ENCODE measurements at regions of chr2 and their contacts with region 1.

Region 1: GRCh38 chr2:17851731-17852585 is 26.5 kb upstream of the KCNS3 start:
- DNase-seq: no peak
- H3K4me3 ChIP-seq: no peak overlapping the region
- H3K27ac ChIP-seq: no peak overlapping the region
- H3K4me1 ChIP-seq: peaks cover 0 to 6% (median 0%) of the 10 kb centered on the region in 3 donors
- H3K27me3 ChIP-seq: peaks cover 0 to 32% (median 0%) of the 10 kb centered on the region in 4 donors
- CTCF ChIP-seq: peak; percentile 70 to 98 (median 88)
- POLR2A ChIP-seq: no peak

Region 2: DNA sequence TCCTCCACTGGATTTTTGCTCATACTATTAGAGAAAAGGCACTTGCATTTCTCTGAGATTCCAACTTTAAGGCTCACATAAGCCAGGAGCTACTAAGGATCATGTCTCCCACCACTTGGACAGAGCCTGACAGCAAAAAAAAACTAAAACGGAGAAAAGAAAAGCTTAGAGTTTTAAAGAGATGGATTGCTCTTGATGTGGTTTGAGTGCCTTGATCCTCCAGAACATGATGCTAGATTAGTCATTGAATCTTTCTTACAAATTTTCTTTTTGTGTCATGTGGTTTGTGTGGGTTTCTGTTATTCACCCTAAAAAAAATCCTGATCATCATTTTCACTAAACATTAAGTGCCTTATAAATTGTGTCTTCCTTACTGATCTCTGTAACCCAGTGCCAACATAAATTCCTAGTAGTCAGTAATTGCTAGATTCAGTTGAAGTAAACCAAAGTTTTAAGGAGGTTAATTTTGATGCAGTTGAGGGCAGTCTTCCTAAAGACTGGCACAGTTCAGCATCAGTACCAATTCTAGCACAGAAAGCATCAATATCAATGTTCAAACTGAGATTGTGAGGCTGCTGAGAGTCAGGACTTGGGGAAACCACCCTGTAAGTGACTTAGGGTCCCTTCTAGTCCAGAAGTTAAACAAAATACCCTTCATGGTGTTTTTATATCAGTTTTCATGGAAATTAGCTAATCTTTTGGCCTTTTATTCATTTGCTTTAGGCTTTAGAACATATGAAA is 540.0 kb before region 1 on chr2:
- intact Hi-C with region 1: no loop called
- DNase-seq: no peak
- H3K4me3 ChIP-seq: no peak overlapping the region
- H3K27ac ChIP-seq: no peak overlapping the region
- H3K4me1 ChIP-seq: no peaks in the 10 kb centered on the region
- H3K27me3 ChIP-seq: no peaks in the 10 kb centered on the region
- CTCF ChIP-seq: no peak
- POLR2A ChIP-seq: no peak

Region 3: GRCh38 chr2:17912266-17912691 is 60.3 kb after region 1 on chr2:
- intact Hi-C with region 1: no loop called
- DNase-seq: no peak
- H3K4me3 ChIP-seq: no peak overlapping the region
- H3K27ac ChIP-seq: no peak overlapping the region
- H3K4me1 ChIP-seq: peaks cover 0 to 20% (median 0%) of the 10 kb centered on the region in 3 donors
- H3K27me3 ChIP-seq: no peaks in the 10 kb centered on the region
- CTCF ChIP-seq: no peak
- POLR2A ChIP-seq: no peak

Region 4: DNA sequence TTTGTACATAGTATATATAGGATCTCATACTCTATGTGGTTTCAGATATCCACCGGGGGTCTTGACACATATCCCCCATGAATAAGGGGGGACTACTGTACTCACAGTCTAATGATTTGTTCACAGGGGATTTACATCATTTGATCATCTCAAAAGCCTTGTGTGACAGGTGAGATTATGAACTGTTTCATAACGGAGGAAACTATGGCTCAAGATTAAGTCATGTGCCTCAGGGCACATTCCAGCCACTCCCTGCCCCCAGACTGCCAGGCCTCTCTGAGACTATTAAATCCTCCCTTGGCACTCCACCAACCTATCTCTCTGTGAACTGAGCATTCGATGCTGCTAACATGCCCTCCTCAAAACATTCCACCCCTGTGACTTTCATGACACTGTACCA is 195.9 kb after region 1 on chr2:
- intact Hi-C with region 1: no loop called
- DNase-seq: no peak
- H3K4me3 ChIP-seq: peak overlapping the region in 1 of 4 donors; percentile 6
- H3K27ac ChIP-seq: no peak overlapping the region
- H3K4me1 ChIP-seq: peaks cover 0 to 27% (median 16%) of the 10 kb centered on the region in 3 donors
- H3K27me3 ChIP-seq: peaks cover 0 to 79% (median 0%) of the 10 kb centered on the region in 4 donors
- CTCF ChIP-seq: no peak
- POLR2A ChIP-seq: no peak

Region 5: DNA sequence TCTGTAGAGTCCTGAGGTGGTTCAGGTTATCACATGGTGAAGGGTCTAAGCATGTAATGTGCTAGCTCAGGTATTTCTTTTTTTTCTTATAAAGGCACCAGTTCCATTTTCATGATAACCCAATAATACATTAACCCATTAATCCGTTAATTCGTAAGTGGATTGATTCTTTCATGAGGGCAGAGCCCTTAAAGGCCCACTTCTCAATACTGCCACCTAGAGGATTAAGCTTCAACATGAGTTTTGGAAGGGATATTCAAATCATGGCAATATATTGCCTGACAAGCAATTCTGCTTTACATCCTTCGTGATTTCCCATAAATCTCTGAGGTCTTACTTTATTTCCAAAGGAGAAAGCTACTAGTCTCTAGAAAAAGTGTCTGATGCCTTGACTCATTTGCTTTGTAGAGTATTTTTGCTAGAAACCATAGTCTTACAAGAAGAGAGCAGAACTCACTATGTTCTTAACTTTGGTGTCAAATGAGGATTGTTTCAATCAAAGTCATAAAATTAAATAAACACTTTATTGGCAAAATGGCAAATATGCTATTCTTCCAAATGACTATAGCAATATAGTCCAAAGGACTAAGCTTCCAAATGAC is 297.8 kb after region 1 on chr2:
- intact Hi-C with region 1: loop called (anchors 10 kb)
- DNase-seq: no peak
- H3K4me3 ChIP-seq: no peak overlapping the region
- H3K27ac ChIP-seq: no peak overlapping the region
- H3K4me1 ChIP-seq: peaks cover 0 to 12% (median 0%) of the 10 kb centered on the region in 3 donors
- H3K27me3 ChIP-seq: peaks cover 0 to 24% (median 0%) of the 10 kb centered on the region in 4 donors
- CTCF ChIP-seq: peak; percentile 19 to 74 (median 54)
- POLR2A ChIP-seq: no peak

Region 6: DNA sequence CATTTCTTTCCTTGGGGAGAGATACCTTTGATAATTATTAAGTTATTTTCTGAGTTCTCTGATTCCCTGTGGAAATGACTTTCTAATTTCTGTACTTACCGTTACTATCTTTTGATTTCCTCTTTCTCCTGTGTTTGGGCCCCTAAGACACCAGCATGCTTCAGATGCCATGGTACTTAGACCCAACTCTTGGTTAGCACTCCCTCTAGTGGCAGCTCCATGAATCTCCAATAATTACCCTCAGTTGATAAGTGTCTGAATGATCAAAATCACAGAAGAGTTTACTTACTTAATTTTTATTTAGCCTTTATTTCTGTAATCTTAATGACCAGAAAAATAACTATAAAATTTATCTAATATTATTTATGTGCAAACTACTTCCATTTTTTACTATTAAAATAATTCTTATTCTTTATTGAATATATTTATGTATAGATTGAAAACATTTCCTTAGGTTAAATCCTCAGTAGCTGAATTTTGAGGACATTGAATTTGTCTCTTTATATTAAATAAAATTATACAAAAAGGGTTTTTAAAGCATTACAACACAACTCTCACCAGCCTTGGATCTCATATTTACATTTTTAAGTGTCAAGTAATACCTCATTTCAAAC is 326.9 kb after region 1 on chr2:
- intact Hi-C with region 1: loop called (anchors 10 kb)
- DNase-seq: no peak
- H3K4me3 ChIP-seq: no peak overlapping the region
- H3K27ac ChIP-seq: no peak overlapping the region
- H3K4me1 ChIP-seq: no peaks in the 10 kb centered on the region
- H3K27me3 ChIP-seq: peaks cover 0 to 13% (median 0%) of the 10 kb centered on the region in 4 donors
- CTCF ChIP-seq: peak; percentile 53 to 85 (median 79)
- POLR2A ChIP-seq: no peak

Region 7: GRCh38 chr2:18387441-18388206 is 535.7 kb after region 1 on chr2:
- intact Hi-C with region 1: loop called (anchors 10 kb)
- DNase-seq: no peak
- H3K4me3 ChIP-seq: no peak overlapping the region
- H3K27ac ChIP-seq: peak overlapping the region in 1 of 4 donors; percentile 34
- H3K4me1 ChIP-seq: peaks cover 0 to 10% (median 0%) of the 10 kb centered on the region in 3 donors
- H3K27me3 ChIP-seq: no peaks in the 10 kb centered on the region
- CTCF ChIP-seq: peak; percentile 75 to 97 (median 89)
- POLR2A ChIP-seq: no peak